Tibial artery (tissue), 4 donors: ENCODE measurements at regions of chr1 and their contacts with region 1.

Region 1: GRCh38 chr1:154272217-154272998 is at the start of gene HAX1:
- DNase-seq: peak; percentile 93 to 96
- H3K4me3 ChIP-seq: peak within 1 kb of the TSS; percentile 75 to 86
- H3K27ac ChIP-seq: peak within 1 kb of the TSS; percentile 90 to 92
- H3K4me1 ChIP-seq: peaks cover 0 to 20% (median 15%) of the 10 kb centered on the region in 4 donors
- H3K27me3 ChIP-seq: no peaks in the 10 kb centered on the region
- CTCF ChIP-seq: peak; percentile 74 to 78

Region 2: DNA sequence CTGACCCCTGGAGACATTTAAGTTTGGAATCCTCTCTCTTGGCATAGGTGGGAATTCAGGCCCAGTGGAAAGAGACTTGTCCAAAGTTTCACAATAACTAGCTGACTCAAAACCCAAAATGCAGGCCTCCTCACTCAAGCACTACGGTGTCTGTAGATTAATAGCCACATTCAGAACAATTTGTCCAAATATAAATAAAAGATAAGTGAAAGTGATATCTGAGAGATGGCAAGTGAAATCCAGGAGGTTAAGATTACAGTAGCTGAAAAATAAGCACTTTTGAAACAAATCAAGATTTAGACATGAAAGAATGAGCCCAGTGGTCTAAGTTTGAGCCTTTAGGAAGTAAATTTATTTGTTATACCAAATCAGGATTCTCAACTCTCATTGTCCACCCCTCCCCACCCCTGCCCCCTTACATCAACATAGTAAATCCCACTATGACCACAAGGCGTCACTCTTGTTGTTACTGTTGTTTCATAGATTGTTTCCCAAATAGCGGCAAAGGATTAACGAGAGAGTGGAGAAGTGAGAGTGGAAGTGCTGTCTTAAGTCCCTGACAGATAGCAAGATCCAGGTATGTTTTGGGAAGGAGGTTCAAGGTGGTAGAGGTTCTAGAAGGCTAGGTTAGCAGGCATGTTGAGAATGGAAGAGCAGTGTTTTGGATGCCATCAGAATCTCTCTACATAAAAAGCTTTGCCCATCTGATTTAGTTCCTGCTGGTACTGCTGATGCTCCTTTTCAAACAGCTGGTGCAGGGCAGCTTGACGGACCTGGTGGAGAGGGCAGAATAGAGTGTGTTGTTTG is 73.4 kb before region 1 on chr1:
- intact Hi-C with region 1: loop called (anchors 5 kb)
- DNase-seq: peak; percentile 29 to 36
- H3K4me3 ChIP-seq: peak overlapping the region in 1 of 2 donors; percentile 19
- H3K27ac ChIP-seq: peak overlapping the region; percentile 51 to 52
- H3K4me1 ChIP-seq: peaks cover 0 to 5% (median 1%) of the 10 kb centered on the region in 4 donors
- H3K27me3 ChIP-seq: peaks cover 0 to 3% of the 10 kb centered on the region in 2 donors
- CTCF ChIP-seq: peak; percentile 45 to 49

Region 3: DNA sequence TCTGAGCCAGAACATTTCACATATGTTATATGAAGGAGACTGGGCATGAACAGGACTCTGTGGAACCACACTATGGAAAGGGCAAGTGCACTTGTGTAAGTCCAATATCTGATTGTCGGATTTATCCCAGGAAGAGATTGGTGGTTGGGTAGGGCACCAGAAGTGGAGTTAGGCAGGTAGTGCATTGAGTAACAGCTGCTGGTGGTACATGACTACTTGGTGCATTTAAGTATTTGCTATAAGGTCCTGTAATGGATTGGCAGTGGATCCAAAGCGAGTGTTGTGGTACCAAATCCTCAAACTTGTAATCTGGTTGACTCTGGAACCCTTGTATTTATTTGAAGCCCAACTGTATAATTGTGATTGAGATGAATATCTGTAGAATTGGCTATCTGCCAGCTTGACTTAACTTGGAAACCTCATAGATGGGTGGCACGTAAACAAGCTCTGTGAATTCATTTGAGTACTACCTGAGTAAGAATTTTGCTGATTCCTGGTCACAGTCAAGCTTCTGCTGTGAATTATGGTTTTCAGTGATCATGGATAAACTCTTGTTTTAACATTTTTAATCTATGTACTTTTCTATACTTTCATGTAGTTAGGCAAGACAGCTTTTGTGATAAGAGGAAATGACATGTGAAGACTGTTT is 30.6 kb before region 1 on chr1:
- intact Hi-C with region 1: no loop called
- DNase-seq: no peak
- H3K4me3 ChIP-seq: no peak overlapping the region
- H3K27ac ChIP-seq: no peak overlapping the region
- H3K4me1 ChIP-seq: no peaks in the 10 kb centered on the region
- H3K27me3 ChIP-seq: no peaks in the 10 kb centered on the region
- CTCF ChIP-seq: no peak

Region 4: GRCh38 chr1:154324669-154325582 is 52.5 kb after region 1 on chr1 and contains the start of gene ATP8B2:
- intact Hi-C with region 1: loop called (anchors 5 kb)
- DNase-seq: peak; percentile 72 to 89
- H3K4me3 ChIP-seq: peak within 1 kb of the TSS; percentile 72 to 90
- H3K27ac ChIP-seq: peak within 1 kb of the TSS; percentile 96 to 99
- H3K4me1 ChIP-seq: peaks cover 6 to 45% (median 32%) of the 10 kb centered on the region in 4 donors
- H3K27me3 ChIP-seq: no peaks in the 10 kb centered on the region
- CTCF ChIP-seq: peak; percentile 91 to 93

Region 5: GRCh38 chr1:154689070-154689469 is 416.7 kb after region 1 on chr1:
- intact Hi-C with region 1: no loop called
- DNase-seq: no peak
- H3K4me3 ChIP-seq: no peak overlapping the region
- H3K27ac ChIP-seq: no peak overlapping the region
- H3K4me1 ChIP-seq: no peaks in the 10 kb centered on the region
- H3K27me3 ChIP-seq: peaks cover 0 to 11% of the 10 kb centered on the region in 2 donors
- CTCF ChIP-seq: no peak